A673 (cell line): ENCODE measurements at regions of chr6 and their contacts with region 1.

Region 1: GRCh38 chr6:74604305-74604940 is 601.4 kb downstream of the COL12A1 start:
- DNase-seq: peak; percentile 9
- H3K4me3 ChIP-seq: no peak overlapping the region
- H3K27ac ChIP-seq: no peak overlapping the region
- H3K4me1 ChIP-seq: peaks cover 8% of the 10 kb centered on the region
- H3K27me3 ChIP-seq: no peaks in the 10 kb centered on the region
- CTCF ChIP-seq: no peak

Region 2: GRCh38 chr6:73885393-73885792 is 719.0 kb before region 1 on chr6:
- CTCF ChIA-PET with region 1: no interaction called
- POLR2A ChIA-PET with region 1: interaction called, 13 read pairs
- intact Hi-C with region 1: no loop called
- DNase-seq: peak; percentile 6
- H3K4me3 ChIP-seq: no peak overlapping the region
- H3K27ac ChIP-seq: no peak overlapping the region
- H3K4me1 ChIP-seq: peaks cover 38% of the 10 kb centered on the region
- H3K27me3 ChIP-seq: no peaks in the 10 kb centered on the region
- CTCF ChIP-seq: no peak